Activated naive CD4-positive, alpha-beta T cell treated with anti-CD3 and anti-CD28 coated beads for 36 hours (primary cell): ENCODE measurements at regions of chr18 and their contacts with region 1.

Region 1: DNA sequence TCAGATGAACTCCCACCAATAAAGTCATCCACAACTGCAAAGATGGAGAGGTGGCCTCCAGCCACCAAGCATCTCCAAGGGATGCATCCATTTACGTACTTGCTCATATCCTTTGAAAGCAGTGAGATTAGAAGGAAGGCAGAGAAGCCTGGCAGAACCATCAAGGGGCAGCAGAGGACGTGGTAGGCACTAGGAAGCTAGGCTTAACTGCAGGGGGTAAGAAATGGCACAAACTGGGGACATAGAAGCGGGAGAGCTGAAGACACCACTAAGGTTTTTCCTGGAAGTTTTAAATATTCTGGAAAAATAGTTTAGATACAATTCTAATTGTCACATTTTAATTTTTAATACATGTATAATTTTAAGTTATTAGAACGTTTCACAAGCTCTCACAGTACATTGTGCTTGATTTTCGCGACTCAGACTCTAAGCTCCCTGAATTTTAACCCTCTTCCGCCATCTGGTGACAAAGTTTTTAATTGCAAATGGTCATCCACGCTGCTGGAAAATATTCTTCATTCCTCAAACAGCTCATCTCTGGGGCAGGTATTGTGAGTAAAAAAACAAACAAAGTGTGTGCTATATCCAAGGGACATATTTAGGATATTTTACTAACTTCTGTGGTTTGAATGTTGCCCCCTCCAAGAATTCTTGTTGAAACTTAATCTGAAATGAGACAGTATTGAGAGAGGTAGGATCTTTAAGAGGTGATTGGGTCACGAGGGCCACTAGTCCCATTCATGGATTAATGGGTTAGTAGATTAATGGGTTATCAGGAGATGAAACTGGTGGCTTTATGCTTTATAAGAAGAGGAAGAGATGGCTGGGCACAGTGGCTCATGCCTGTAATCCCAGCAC is 1.6 kb upstream of the PSTPIP2 start:
- DNase-seq: peak; percentile 75
- H3K4me3 Mint-ChIP-seq: no peak overlapping the region
- H3K27ac Mint-ChIP-seq: no peak overlapping the region
- H3K4me1 Mint-ChIP-seq: peaks cover 40% of the 10 kb centered on the region
- H3K27me3 Mint-ChIP-seq: no peaks in the 10 kb centered on the region

Region 2: GRCh38 chr18:45423659-45424058 is 650.0 kb before region 1 on chr18:
- CTCF ChIA-PET with region 1: no interaction called
- intact Hi-C with region 1: no loop called
- DNase-seq: no peak
- H3K4me3 Mint-ChIP-seq: no peak overlapping the region
- H3K27ac Mint-ChIP-seq: no peak overlapping the region
- H3K4me1 Mint-ChIP-seq: no peaks in the 10 kb centered on the region
- H3K27me3 Mint-ChIP-seq: no peaks in the 10 kb centered on the region

Region 3: GRCh38 chr18:45621061-45621511 is 452.6 kb before region 1 on chr18:
- CTCF ChIA-PET with region 1: interaction called, 3 read pairs
- intact Hi-C with region 1: loop called (anchors 1 kb)
- DNase-seq: peak; percentile 51
- H3K4me3 Mint-ChIP-seq: no peak overlapping the region
- H3K27ac Mint-ChIP-seq: no peak overlapping the region
- H3K4me1 Mint-ChIP-seq: no peaks in the 10 kb centered on the region
- H3K27me3 Mint-ChIP-seq: no peaks in the 10 kb centered on the region

Region 4: GRCh38 chr18:45690975-45691815 is 382.5 kb before region 1 on chr18:
- CTCF ChIA-PET with region 1: interaction called, 11 read pairs
- intact Hi-C with region 1: loop called (anchors 1 kb)
- DNase-seq: peak; percentile 89
- H3K4me3 Mint-ChIP-seq: no peak overlapping the region
- H3K27ac Mint-ChIP-seq: no peak overlapping the region
- H3K4me1 Mint-ChIP-seq: peaks cover 36% of the 10 kb centered on the region
- H3K27me3 Mint-ChIP-seq: no peaks in the 10 kb centered on the region

Region 5: GRCh38 chr18:45874491-45875184 is 199.1 kb before region 1 on chr18:
- CTCF ChIA-PET with region 1: interaction called, 21 read pairs
- intact Hi-C with region 1: loop called (anchors 1 kb)
- DNase-seq: peak; percentile 88
- H3K4me3 Mint-ChIP-seq: peak overlapping the region; percentile 1
- H3K27ac Mint-ChIP-seq: peak overlapping the region; percentile 95
- H3K4me1 Mint-ChIP-seq: peaks cover 31% of the 10 kb centered on the region
- H3K27me3 Mint-ChIP-seq: no peaks in the 10 kb centered on the region

Region 6: DNA sequence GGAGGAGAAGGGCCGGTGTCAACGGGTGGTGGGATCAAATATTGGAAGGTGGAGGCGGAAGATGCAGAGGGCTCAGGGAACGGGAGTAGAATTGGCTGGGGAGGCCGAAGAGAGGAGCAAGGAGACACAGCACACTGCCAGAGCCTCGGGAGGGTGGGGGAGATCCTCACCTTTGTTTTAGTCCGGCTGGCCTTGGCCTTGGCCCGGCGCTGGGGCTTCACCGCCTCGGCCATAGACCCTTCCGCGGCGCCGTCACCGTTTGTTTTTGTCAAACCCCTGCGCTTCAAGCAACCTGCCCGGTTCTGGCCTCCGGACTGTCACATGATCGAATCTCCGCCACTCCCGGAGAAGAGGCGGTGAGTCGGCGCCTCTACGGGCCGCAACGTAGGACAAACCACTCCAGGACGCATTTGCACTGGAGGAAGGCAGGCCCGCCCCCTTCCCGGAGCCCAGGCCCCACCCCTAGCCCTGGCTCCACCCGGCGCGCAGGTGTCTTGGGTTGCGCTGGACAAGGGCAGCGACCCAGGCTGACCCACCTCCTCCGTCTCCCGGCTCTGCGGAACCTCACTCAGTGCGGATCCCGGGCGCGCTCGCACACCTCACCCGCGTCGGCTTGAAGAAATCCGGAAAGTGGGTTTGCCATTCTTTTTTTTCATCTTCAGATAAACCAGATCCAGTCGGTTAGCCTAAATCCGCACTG is 106.5 kb before region 1 on chr18 and contains the start of gene EPG5:
- CTCF ChIA-PET with region 1: interaction called, 12 read pairs
- intact Hi-C with region 1: loop called (anchors 2 kb)
- DNase-seq: peak; percentile 98
- H3K4me3 Mint-ChIP-seq: peak within 1 kb of the TSS; percentile 97
- H3K27ac Mint-ChIP-seq: peak within 1 kb of the TSS; percentile 86
- H3K4me1 Mint-ChIP-seq: peaks cover 33% of the 10 kb centered on the region
- H3K27me3 Mint-ChIP-seq: no peaks in the 10 kb centered on the region
- total RNA-seq, gene EPG5: 18.3 to 21.2 TPM

Region 7: DNA sequence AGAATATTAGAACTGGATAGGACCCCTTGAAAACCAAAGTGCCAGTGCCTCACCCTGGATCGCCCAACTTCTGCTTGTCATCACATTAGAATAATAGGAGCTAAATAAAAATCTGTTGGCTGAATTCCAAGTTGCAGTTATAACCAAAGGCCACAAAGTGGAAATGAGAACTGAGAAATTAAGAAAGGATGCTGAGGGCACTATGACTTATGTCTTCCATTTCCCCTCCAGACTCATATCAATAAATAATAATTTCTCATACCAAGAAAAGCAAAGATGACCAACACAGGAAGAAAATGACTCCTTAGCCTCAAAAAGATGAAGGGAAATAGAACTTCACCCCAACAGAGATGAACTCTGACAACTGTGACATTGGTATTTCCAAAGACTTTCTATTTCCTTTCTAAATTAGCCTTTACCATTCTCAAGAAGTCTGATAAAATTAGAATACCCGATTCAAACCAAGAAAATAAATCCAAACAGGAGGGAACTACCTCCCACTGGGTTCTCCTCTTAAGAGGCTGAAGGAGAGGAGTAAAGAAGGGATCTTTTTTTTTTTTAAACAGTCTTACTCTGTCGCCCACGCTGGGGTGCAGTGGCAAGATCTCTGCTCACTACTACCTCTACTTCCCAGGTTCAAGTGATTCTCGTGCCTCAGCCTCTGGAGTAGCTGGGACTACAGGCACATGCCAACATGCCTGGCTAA is 60.1 kb before region 1 on chr18:
- CTCF ChIA-PET with region 1: interaction called, 12 read pairs
- intact Hi-C with region 1: loop called (anchors 1 kb)
- DNase-seq: no peak
- H3K4me3 Mint-ChIP-seq: no peak overlapping the region
- H3K27ac Mint-ChIP-seq: no peak overlapping the region
- H3K4me1 Mint-ChIP-seq: peaks cover 13% of the 10 kb centered on the region
- H3K27me3 Mint-ChIP-seq: no peaks in the 10 kb centered on the region

Region 8: GRCh38 chr18:46084431-46084830 is 10.7 kb after region 1 on chr18:
- CTCF ChIA-PET with region 1: interaction called, 20 read pairs
- intact Hi-C with region 1: no loop called
- DNase-seq: no peak
- H3K4me3 Mint-ChIP-seq: no peak overlapping the region
- H3K27ac Mint-ChIP-seq: no peak overlapping the region
- H3K4me1 Mint-ChIP-seq: peaks cover 2% of the 10 kb centered on the region
- H3K27me3 Mint-ChIP-seq: no peaks in the 10 kb centered on the region